Esophagus muscularis mucosa (tissue), 4 donors: ENCODE measurements at regions of chr4 and their contacts with region 1.

Region 1: GRCh38 chr4:20251796-20252655 is at the start of gene SLIT2:
- DNase-seq: peak; percentile 97
- H3K4me3 ChIP-seq: peak within 1 kb of the TSS; percentile 78 to 89 (median 84)
- H3K27ac ChIP-seq: peak within 1 kb of the TSS; percentile 80 to 88 (median 86)
- H3K4me1 ChIP-seq: peaks cover 21 to 54% (median 33%) of the 10 kb centered on the region in 4 donors
- H3K27me3 ChIP-seq: peaks cover 0 to 14% (median 3%) of the 10 kb centered on the region in 4 donors
- CTCF ChIP-seq: peak in 1 of 3 experiments; percentile 16
- EP300 ChIP-seq: no peak
- POLR2A ChIP-seq: peak; percentile 59
- total RNA-seq, gene SLIT2: 82.3 to 101 (median 92.0) TPM

Region 2: DNA sequence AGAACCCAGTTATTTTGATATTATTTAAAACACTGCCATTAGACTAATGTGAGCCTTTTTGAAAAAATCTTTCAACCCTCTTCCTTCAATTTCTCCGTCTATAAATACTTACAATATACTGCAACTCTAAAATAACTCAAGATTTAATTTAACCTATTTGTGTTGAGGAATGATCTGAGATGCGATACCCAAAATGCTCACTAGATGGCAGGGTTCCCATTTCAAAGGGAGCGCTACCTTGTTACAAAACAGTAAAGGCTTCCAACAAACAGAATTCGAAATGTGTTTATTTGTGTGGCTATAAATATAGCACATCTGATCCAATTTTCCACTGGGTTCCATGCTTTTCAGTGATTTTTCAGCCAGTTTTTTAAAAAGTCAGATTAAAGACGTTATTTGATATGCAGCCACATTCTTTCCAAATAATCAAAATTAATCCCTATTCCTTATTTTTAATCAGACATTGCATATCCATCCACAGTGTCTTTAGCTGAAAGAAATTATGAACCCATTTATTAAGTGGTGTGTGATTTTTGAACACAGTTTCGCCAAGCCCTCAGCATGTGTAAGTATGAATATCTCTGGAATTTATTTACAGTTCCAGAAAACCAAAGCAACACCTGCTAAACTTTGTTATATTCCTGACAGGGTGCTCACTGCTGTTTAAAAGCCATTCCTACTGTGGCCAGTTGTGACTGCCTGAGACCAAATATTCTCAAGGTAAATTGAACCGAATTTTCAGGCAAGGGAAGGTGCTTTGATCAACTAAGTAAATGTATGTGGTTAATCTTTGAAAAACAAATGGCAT is 1562.5 kb before region 1 on chr4:
- intact Hi-C with region 1: loop called (anchors 10 kb)
- DNase-seq: no peak
- H3K4me3 ChIP-seq: no peak overlapping the region
- H3K27ac ChIP-seq: no peak overlapping the region
- H3K4me1 ChIP-seq: peaks cover 0 to 22% (median 16%) of the 10 kb centered on the region in 4 donors
- H3K27me3 ChIP-seq: no peaks in the 10 kb centered on the region
- CTCF ChIP-seq: peak; percentile 70 to 86 (median 82)
- EP300 ChIP-seq: no peak
- POLR2A ChIP-seq: no peak

Region 3: GRCh38 chr4:19224820-19225219 is 1027.2 kb before region 1 on chr4:
- intact Hi-C with region 1: loop called (anchors 2 kb)
- DNase-seq: no peak
- H3K4me3 ChIP-seq: no peak overlapping the region
- H3K27ac ChIP-seq: no peak overlapping the region
- H3K4me1 ChIP-seq: no peaks in the 10 kb centered on the region
- H3K27me3 ChIP-seq: no peaks in the 10 kb centered on the region
- CTCF ChIP-seq: peak; percentile 24 to 44 (median 42)
- EP300 ChIP-seq: no peak
- POLR2A ChIP-seq: no peak

Region 4: GRCh38 chr4:19314116-19314515 is 937.9 kb before region 1 on chr4:
- intact Hi-C with region 1: loop called (anchors 5 kb)
- DNase-seq: no peak
- H3K4me3 ChIP-seq: no peak overlapping the region
- H3K27ac ChIP-seq: no peak overlapping the region
- H3K4me1 ChIP-seq: peaks cover 0 to 5% (median 0%) of the 10 kb centered on the region in 4 donors
- H3K27me3 ChIP-seq: no peaks in the 10 kb centered on the region
- CTCF ChIP-seq: no peak
- EP300 ChIP-seq: no peak
- POLR2A ChIP-seq: no peak

Region 5: DNA sequence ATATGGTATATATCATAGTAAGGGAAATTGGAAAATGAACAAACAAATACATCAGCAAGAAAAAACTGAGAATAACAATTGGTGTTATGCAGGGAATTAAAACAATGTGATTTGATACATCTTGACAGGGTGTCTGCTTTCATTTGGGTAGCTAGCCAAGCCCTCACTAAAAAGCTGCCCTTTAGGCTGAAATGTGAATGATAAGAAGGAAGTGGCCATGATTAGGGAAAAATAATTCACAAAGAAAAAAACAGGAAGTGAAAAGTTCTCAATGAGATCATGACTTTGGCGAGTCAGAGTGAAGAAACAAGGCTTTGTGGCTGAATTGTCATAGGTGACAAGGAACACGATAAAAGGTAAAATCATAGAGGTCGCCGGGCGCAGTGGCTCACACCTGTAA is 676.1 kb before region 1 on chr4:
- intact Hi-C with region 1: loop called (anchors 10 kb)
- DNase-seq: no peak
- H3K4me3 ChIP-seq: no peak overlapping the region
- H3K27ac ChIP-seq: no peak overlapping the region
- H3K4me1 ChIP-seq: peaks cover 0 to 38% (median 30%) of the 10 kb centered on the region in 4 donors
- H3K27me3 ChIP-seq: no peaks in the 10 kb centered on the region
- CTCF ChIP-seq: no peak
- EP300 ChIP-seq: no peak
- POLR2A ChIP-seq: no peak

Region 6: DNA sequence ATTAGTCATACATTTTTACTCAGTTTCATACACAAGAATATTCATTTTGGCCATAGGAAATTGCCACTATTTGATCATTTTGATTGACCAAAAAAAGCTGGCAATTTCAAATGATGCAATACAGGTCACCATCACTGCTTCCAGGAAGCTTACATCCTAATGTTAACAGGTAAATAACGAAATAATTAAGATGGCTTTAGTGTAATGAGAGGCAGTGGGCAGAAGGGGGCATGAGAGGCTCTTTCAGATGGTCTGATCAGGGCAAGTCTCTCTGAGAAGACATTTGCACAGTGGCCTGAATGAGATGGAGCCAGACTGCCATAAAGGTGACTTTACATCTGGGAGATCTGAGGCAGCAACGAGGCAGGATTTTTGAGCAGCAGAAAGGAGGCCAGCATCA is 170.4 kb after region 1 on chr4:
- intact Hi-C with region 1: loop called (anchors 5 kb)
- DNase-seq: no peak
- H3K4me3 ChIP-seq: no peak overlapping the region
- H3K27ac ChIP-seq: no peak overlapping the region
- H3K4me1 ChIP-seq: peaks cover 0 to 35% (median 15%) of the 10 kb centered on the region in 4 donors
- H3K27me3 ChIP-seq: no peaks in the 10 kb centered on the region
- CTCF ChIP-seq: peak in 2 of 3 experiments; percentile 52 to 61
- EP300 ChIP-seq: no peak
- POLR2A ChIP-seq: no peak